ENCODE measurements at regions of chr9 and their contacts with region 1.

Region 1: DNA sequence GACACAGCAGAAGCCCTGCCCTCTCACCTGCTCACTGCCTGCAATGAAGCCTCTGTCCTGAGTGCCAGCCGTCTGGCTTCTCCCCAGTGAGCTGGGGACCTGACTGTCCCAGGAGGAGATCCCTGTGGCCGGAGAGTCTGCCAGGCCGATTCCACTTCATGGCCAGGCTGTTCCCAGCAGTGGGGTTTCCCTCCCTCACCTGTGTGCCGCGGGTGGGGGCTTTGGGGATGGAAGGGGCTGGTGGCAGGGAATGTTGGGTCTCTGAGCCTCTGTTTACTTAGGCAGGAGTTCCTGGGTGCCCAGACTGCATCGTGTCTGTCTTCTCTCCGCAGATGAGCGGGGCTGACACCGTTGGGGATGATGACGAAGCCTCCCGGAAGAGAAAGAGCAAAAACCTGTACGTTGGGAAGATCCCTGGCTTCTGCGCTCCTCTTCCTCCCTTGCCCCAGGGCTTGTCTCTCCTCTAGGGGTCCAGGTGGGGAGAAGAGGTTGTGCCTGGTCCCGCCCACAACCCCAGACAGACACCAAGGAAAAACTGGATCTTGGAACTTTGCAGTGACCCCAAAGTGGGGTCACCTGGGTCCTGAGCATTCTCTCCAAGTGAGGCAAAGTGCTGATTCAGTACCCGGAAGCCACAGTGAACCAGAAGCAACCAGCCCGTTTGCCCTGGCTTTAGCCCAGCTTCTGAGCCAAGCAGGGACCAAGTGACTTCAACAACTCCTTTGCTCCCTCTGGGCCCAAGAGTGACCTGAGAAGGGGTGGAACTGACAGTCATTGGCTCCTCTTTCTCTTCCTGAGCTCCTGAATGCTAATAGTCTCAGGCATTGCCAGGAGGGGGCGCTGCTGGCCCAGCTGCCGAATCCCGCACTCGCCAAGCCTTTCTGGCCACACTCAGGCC is 127.7 kb downstream of the RGS3 start:
- DNase-seq: peak; percentile 62
- ATAC-seq: peak; percentile 35
- H3K4me3 Mint-ChIP-seq: no peak overlapping the region
- H3K27ac Mint-ChIP-seq: no peak overlapping the region
- H3K4me1 Mint-ChIP-seq: peaks cover 51% of the 10 kb centered on the region
- H3K27me3 Mint-ChIP-seq: no peaks in the 10 kb centered on the region

Region 2: DNA sequence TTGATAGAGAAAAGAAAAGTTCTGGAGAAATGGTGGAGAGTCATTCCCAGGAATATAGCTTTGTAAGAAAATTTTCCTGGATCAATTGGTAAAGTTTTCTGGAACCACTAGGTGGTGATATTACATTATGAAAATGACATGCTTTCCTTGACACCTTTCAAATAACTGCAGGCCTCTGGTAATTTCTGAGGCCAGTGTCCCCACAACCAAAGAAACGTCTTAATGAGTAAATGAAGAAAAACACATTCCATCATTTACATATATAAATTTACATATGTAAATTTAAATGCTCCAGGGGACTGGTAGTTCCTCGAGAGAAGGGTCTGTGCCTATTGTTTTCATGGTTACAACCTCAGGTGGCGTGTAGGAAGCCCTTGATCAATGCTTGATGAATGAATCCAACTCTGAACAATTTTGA is 144.9 kb before region 1 on chr9:
- CTCF ChIA-PET with region 1: interaction called, 22 read pairs
- POLR2A ChIA-PET with region 1: no interaction called
- DNase-seq: peak; percentile 31
- ATAC-seq: no peak
- H3K4me3 Mint-ChIP-seq: no peak overlapping the region
- H3K27ac Mint-ChIP-seq: no peak overlapping the region
- H3K4me1 Mint-ChIP-seq: peaks cover 3% of the 10 kb centered on the region
- H3K27me3 Mint-ChIP-seq: no peaks in the 10 kb centered on the region

Region 3: GRCh38 chr9:113602126-113603044 is 11.1 kb after region 1 on chr9:
- CTCF ChIA-PET with region 1: interaction called, 35 read pairs
- POLR2A ChIA-PET with region 1: interaction called, 3 read pairs
- DNase-seq: peak; percentile 39
- ATAC-seq: peak; percentile 46
- H3K4me3 Mint-ChIP-seq: no peak overlapping the region
- H3K27ac Mint-ChIP-seq: no peak overlapping the region
- H3K4me1 Mint-ChIP-seq: peaks cover 7% of the 10 kb centered on the region
- H3K27me3 Mint-ChIP-seq: no peaks in the 10 kb centered on the region

Measured in activated CD8-positive, alpha-beta T cell treated with anti-CD3 and anti-CD28 coated beads, Interleukin-2, amount 10 ng/mL, durations not matched to agents 7 days and 5 days (primary cell).